Ascending aorta (tissue), 2 donors: ENCODE measurements at regions of chr2 and their contacts with region 1.

Region 1: DNA sequence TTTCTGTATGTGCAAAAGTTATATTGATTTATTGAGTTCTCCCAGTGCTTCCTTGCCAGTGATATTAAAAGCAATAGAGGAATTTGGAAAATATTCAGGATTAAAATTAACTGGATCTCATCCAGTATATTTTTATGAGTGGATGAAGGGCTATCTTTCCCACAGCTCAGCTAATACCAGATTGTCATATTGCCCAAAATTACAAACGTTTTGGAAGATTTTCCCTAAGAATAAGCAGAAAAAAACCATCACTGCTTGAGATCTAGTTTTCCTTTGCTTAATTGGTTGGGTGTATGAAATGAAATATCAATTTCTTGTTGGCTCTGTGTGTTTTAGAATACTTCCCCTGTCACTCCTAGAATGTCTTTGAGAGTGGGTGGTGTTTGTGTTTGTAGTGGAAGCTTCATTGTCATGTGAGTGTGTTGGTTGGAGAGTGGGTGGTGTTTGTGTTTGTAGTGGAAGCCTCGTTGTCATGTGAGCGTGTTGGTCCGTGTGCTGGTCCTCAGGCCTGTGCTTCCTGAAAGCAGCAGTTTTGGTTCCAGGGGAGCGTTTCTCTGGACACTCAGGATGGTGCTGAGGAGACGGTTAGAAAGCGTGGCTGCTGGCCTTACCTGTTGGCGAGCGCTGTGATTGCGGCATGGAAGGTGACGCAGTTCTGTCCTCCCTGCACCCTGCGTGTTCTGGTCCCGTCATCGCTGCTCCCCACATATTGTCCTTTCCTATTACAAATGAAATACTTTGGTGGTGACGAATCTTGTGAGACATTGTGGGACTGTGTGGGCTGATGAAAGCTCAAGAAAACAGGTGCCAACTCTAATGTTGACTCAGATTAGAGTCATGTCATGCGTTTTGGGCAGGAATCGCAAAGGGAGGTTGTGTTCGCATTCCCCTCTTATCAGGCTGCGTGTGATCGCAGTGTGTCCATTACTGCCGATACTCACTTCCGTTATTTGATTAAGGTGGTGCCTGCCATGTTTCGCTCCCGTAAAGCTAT is 12.4 kb downstream of the ASB1 start:
- DNase-seq: peak in 1 of 2 donors; percentile 82
- H3K4me3 ChIP-seq: peak overlapping the region in 1 of 2 donors; percentile 50
- H3K27ac ChIP-seq: peak overlapping the region; percentile 57 to 65
- H3K4me1 ChIP-seq: peaks cover 0 to 4% of the 10 kb centered on the region in 2 donors
- H3K27me3 ChIP-seq: no peaks in the 10 kb centered on the region
- CTCF ChIP-seq: no peak

Region 2: GRCh38 chr2:238462782-238463396 is 23.7 kb after region 1 on chr2:
- intact Hi-C with region 1: loop called (anchors 2 kb)
- DNase-seq: no peak
- H3K4me3 ChIP-seq: no peak overlapping the region
- H3K27ac ChIP-seq: no peak overlapping the region
- H3K4me1 ChIP-seq: peaks cover 6 to 7% of the 10 kb centered on the region in 2 donors
- H3K27me3 ChIP-seq: no peaks in the 10 kb centered on the region
- CTCF ChIP-seq: peak; percentile 67 to 77 (median 73)

Region 3: DNA sequence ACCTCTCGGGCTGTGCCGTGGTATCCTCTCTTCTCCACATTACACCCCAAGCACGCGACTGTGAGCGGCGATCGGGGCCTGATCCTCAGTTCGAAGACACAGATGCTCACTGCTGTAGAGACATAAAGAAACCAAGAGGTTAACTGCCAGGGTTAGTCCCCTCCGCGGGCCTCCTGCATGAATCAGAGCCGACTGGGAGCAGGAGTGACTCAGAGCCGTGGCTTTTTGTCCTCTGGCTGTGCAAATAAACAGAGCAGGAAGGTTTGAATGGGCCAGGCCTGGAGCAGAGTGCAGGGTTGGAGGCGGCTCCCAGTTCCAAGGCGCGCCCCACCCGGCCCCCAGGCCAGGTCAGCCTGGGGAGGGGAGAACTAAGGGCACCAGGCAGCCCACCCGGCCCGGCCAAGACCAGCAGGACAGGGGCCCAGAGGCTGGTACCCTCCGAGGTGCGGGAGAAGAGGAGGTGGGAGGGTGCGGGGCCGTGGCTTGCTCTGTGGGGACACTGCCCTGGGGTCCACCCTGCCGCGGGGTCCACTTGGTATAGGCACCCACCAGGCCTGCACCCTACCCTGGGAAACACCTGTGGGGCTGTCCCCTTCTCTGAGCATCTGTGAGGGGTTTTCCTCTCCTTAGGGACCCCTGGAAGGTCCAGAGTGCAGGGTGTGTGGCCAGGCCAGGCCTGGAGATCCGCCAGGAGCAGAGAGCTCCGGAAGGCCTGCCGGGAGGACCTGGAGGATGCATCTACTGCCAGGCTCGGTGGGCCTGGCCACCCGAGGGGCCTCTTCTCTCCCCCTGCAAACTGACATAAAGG is 425.3 kb after region 1 on chr2:
- intact Hi-C with region 1: loop called (anchors 10 kb)
- DNase-seq: peak; percentile 79 to 96
- H3K4me3 ChIP-seq: peak overlapping the region; percentile 15 to 48
- H3K27ac ChIP-seq: peak overlapping the region; percentile 86 to 92
- H3K4me1 ChIP-seq: peaks cover 26 to 53% of the 10 kb centered on the region in 2 donors
- H3K27me3 ChIP-seq: no peaks in the 10 kb centered on the region
- CTCF ChIP-seq: no peak